ENCODE measurements at regions of chr5 and their contacts with region 1.

Region 1: DNA sequence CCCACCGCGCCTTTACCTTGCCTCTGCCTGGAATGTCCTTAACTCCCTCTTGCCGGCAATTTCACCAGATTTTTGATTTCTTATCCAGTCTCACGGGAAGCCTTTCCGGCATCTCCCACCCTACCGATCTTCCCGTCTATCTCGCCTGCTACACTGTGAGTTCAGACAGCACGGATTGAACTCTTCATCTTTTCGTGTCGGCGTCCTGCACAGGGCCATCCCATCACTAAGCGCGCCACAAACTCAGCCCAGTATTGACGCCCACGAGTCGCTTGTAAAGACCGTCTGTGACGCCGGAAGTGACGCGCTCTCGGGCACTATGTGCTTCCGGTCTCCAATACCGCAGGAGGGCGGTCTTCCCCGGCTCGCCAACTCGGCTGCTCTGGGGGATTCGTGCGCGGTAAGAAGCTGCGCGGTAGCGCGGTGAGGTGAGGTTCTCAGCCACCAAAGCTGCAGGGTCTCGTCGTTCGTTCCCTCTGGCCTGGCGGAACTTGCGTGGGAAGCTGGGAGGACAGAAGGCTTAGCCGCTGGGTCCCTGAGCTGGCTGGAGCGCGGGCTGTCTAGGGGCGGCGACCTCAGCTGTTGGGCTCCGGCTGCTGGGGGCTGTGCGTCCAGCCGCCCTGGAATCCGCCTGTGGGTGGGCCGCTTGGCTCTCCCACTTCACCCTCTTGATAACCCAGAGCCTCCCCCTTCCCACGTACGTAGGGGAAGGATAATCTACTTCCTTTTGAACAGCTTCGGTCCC is at the start of gene ZCCHC9:
- DNase-seq: peak; percentile 89
- H3K4me3 Mint-ChIP-seq: peak within 1 kb of the TSS; percentile 97
- H3K27ac Mint-ChIP-seq: peak within 1 kb of the TSS; percentile 98
- H3K4me1 Mint-ChIP-seq: peaks cover 32% of the 10 kb centered on the region
- H3K27me3 Mint-ChIP-seq: no peaks in the 10 kb centered on the region
- total RNA-seq, gene ZCCHC9: 41.7 and 47.3 TPM in 2 replicates

Region 2: DNA sequence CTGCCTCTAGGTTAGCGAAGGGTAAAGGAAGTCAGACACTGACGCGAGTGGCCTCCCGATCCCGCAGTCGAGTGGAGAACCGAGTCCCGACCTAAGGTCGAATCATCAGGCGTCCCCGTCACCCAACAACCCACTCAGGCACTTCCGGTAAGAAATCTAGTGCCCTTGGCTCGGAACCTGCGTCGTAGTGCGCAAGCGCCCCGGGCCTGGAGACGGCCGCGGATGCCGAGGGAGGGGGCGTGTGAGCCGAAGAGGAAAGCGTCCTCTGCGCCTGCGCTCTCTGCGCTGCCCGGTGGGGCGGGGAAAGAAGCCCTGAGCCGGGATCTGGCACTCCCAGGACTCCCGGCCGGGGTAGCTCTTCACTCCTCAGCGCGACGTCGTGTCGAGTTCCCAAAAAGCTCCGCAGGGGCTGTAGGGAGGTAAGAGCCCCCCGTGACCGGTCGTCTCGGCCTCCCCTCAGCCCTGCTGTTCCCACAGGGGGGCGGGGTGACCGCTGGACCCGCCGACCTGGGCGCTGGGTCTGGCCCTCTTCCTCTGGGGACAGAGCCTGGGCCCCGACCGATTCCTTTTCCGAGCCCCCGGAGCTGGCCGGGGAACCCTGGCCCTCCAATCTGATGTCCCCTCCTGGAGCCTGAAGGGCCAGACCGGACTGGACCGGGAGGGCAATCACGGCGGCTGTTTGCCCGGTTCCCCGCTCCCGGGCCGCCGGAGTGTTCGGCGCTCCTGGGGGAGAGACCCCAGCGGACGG is 893.5 kb before region 1 on chr5 and contains the start of gene ZFYVE16:
- intact Hi-C with region 1: loop called (anchors 1 kb)
- DNase-seq: peak; percentile 95
- H3K4me3 Mint-ChIP-seq: peak within 1 kb of the TSS; percentile 96
- H3K27ac Mint-ChIP-seq: peak within 1 kb of the TSS; percentile 100
- H3K4me1 Mint-ChIP-seq: peaks cover 25% of the 10 kb centered on the region
- H3K27me3 Mint-ChIP-seq: peaks cover 6% of the 10 kb centered on the region
- total RNA-seq, gene ZFYVE16: 9.4 and 10.3 TPM in 2 replicates

Region 3: GRCh38 chr5:80864706-80865435 is 436.6 kb before region 1 on chr5:
- intact Hi-C with region 1: loop called (anchors 10 kb)
- DNase-seq: no peak
- H3K4me3 Mint-ChIP-seq: peak overlapping the region; percentile 3
- H3K27ac Mint-ChIP-seq: peak overlapping the region; percentile 38
- H3K4me1 Mint-ChIP-seq: peaks cover 65% of the 10 kb centered on the region
- H3K27me3 Mint-ChIP-seq: no peaks in the 10 kb centered on the region

Region 4: DNA sequence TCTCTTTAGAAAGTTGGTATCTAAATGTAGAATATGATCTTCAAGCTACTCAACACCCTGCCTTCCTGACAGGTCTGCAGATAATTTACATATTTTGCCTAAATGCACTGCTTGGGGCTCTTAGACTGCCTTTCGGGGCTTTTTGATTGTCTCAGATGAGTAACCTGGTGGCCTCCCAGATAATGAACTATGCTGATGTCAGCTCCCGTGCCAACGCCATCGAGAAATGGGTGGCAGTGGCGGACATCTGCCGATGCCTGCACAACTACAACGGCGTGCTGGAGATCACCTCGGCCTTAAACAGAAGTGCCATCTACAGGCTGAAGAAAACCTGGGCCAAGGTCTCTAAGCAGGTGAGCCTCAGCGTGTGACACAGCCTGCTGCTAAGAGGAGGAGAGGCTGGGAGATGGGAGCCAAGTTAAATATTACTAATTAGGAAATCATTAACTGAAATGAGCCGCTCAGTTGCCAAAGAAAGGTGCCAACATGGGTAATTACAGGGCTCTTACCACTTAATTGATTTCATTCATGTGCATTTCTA is 89.2 kb before region 1 on chr5:
- intact Hi-C with region 1: loop called (anchors 5 kb)
- DNase-seq: no peak
- H3K4me3 Mint-ChIP-seq: no peak overlapping the region
- H3K27ac Mint-ChIP-seq: no peak overlapping the region
- H3K4me1 Mint-ChIP-seq: no peaks in the 10 kb centered on the region
- H3K27me3 Mint-ChIP-seq: no peaks in the 10 kb centered on the region

Region 5: DNA sequence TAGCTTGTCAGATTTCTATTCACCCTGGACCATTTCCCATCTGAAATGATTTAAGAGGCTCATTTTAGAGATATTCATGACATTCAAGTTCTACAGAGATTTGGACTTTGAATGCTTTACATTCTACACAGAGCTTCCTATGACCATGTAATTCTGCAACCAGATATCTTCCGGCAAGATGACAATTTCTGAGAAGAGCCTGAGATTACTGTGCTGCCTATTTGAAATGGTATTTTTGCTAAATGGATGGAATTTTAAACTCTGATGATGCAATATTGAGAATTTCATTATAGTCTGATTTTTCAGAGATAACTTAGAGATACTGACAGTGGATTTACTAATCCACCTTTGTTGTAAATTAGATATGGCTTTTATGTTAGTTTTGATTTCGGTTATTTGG is 108.5 kb after region 1 on chr5:
- intact Hi-C with region 1: no loop called
- DNase-seq: no peak
- H3K4me3 Mint-ChIP-seq: no peak overlapping the region
- H3K27ac Mint-ChIP-seq: no peak overlapping the region
- H3K4me1 Mint-ChIP-seq: no peaks in the 10 kb centered on the region
- H3K27me3 Mint-ChIP-seq: no peaks in the 10 kb centered on the region

Region 6: GRCh38 chr5:81525690-81526089 is 224.2 kb after region 1 on chr5:
- intact Hi-C with region 1: no loop called
- DNase-seq: no peak
- H3K4me3 Mint-ChIP-seq: peak overlapping the region; percentile 3
- H3K27ac Mint-ChIP-seq: peak overlapping the region; percentile 88
- H3K4me1 Mint-ChIP-seq: peaks cover 14% of the 10 kb centered on the region
- H3K27me3 Mint-ChIP-seq: no peaks in the 10 kb centered on the region

Region 7: DNA sequence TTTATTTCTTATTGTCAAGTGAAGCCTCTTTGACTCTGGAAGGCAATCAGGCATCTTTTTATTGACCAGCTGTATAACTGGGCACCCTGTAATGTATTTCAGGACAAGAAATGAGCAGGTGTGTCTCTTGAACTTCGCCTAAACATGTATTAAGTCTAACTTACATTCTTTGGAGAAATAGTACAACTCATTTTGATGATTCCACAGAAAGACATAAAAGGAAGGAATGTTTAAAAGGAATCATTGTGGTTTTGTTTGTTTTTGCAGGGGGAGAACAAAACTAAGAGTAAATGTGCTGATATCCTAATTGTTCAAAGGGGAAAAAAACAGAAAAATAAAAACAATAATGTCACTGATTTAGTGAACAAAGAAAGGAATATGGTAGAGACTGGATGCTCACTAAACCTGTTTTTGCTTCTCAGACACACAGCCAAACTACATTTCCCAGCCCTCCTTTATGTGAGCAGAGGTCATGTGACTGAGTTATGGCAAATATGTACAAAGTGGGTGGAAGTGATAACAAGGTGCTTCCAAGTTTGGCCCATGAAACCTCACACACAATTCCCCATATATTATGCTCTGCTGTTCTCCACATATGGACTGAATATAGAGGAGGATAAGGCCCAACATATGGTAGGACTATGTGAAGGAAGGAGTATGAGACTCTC is 243.0 kb after region 1 on chr5:
- intact Hi-C with region 1: no loop called
- DNase-seq: no peak
- H3K4me3 Mint-ChIP-seq: no peak overlapping the region
- H3K27ac Mint-ChIP-seq: no peak overlapping the region
- H3K4me1 Mint-ChIP-seq: no peaks in the 10 kb centered on the region
- H3K27me3 Mint-ChIP-seq: no peaks in the 10 kb centered on the region

Region 8: DNA sequence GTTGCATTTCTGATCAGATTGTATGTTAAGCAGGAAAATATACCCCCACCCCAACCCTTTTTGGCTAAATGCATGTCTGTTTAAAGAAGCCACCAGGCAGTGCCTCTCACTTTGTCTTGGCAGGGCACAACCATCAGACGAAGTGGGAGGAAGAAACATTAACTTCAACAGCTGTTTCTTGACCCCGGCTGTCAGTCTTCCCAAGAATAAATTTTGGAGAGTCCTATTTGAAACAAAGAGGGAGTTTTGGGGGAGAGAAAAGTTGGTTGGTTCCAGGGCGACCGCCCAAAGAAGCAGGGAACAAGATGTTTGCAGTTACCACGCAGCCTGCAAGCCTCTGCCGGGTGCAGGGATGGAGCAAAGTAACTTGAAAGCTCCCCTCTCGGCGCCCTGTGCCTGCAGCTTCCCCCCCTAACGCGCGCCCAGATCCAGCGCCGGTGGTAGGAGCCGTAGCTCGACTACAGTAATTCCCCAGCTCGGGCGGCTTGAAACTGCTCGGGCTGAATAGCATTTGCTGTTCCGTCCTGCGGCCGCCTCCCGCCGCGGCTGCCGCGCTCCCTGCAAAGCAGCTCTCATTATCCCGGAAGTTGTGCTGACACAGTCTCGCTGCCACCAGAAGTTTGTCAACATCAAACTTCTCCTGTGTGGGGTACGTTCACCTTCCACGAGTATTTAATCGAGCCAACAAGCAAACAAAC is 550.2 kb after region 1 on chr5:
- intact Hi-C with region 1: loop called (anchors 5 kb)
- DNase-seq: peak; percentile 87
- H3K4me3 Mint-ChIP-seq: peak overlapping the region; percentile 94
- H3K27ac Mint-ChIP-seq: peak overlapping the region; percentile 96
- H3K4me1 Mint-ChIP-seq: peaks cover 41% of the 10 kb centered on the region
- H3K27me3 Mint-ChIP-seq: peaks cover 1% of the 10 kb centered on the region

Region 9: DNA sequence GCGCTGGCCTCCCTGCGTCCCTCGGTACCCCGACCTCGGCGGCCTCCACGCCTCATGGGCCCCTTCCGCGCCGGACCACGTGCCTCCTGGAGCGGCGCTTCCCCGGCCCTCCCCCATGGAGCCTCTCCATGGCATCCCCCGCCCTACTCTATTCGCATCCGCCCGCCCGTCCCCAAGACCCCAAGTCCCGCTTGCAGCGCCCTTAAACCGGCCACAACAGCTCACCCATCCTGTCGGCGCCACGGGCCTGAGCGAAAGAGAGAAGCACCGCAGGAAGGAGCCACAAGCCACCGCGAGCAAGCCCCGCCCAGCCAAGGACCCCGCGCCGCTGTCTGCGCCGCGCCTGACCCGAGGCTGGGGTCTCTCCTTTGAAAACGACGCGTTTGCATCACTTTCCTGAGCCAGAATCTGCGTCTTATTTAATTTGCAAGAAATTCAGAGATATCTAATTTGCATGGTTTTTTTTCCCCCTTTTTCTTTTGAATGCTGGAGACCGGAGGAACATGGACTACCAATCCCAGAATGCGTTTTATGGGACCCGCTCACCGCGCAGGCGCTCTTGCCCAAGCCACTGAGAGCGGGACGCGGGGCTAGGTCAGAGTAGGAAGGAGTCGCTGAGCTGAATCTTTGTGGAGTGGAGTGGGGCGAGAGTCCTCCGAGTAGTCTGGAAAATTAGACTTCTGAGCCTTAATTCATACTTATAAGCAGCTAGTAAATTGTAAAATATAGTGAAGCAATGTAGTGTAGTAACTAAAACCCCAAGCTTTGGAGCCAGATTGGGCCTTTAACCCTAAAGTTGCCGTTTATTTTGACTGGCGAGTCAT is 976.9 kb after region 1 on chr5 and contains the start of gene RPS23:
- intact Hi-C with region 1: loop called (anchors 2 kb)
- DNase-seq: peak; percentile 81
- H3K4me3 Mint-ChIP-seq: peak within 1 kb of the TSS; percentile 92
- H3K27ac Mint-ChIP-seq: peak within 1 kb of the TSS; percentile 96
- H3K4me1 Mint-ChIP-seq: peaks cover 34% of the 10 kb centered on the region
- H3K27me3 Mint-ChIP-seq: no peaks in the 10 kb centered on the region
- total RNA-seq, gene RPS23: 2,220 and 2,235 TPM in 2 replicates

Measured in activated T-helper 1 cell treated with anti-CD3 and anti-CD28 coated beads, Interleukin-12 subunit alpha, Interleukin-12 subunit beta, Interleukin-2, Interleukin-4 antibody, amounts not matched to agents 30 ng/mL and 10 ng/mL and 1 ng/mL, durations not matched to agents 14 hours and 24 hours and 36 hours (primary cell).